ENCODE measurements at regions of chr11 and their contacts with region 1.

Region 1: DNA sequence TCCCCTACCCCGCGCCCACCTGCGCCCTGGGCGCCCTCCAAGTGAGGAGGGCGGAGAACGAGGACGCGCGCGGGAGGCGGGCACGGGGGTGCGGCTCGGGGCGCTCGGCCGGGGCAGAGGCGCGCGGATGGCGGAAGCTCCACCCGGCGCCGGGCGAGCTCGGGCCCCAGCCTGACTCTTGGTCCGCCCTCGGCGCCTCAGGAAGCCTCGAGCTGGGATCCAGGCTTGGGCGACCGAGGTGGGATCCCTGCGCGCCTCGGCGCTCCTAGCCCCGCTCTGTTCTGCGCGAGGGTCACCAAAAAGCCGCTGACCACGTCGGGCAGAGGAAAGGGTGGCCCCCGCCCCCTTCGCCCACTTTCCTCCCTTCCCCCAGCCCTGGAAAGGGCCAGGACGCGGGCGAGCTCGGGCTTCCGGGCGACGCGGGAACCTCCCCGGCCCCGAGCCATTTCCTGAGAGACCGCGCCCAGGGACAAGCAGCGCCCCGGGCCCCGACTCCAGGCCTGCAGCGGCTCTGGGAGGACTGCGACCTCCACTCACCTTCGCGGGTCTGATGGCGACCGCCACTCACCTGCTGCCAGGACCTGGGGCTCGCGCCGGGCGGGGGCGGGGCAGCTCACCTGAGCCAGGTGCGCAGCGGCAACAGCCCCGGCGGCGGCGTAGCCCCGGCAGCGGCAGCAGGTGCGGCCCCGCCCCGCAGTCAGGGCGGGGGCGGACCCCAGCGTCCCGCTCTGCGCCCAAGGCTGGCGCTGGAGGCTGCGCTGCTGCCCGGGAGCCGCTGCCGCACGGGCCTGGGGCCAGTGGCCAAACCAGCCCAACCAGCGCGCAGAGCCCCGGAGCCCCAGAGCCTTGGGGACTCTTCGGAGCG is 2.2 kb upstream of the SIGIRR start:
- DNase-seq: peak; percentile 82
- ATAC-seq: peak; percentile 46
- H3K4me3 Mint-ChIP-seq: peak overlapping the region; percentile 97
- H3K27ac Mint-ChIP-seq: peak overlapping the region; percentile 86
- H3K4me1 Mint-ChIP-seq: peaks cover 15% of the 10 kb centered on the region
- H3K27me3 Mint-ChIP-seq: no peaks in the 10 kb centered on the region

Region 2: GRCh38 chr11:335779-336658 is 81.0 kb before region 1 on chr11:
- POLR2A ChIA-PET with region 1: no interaction called
- DNase-seq: no peak
- ATAC-seq: no peak
- H3K4me3 Mint-ChIP-seq: no peak overlapping the region
- H3K27ac Mint-ChIP-seq: no peak overlapping the region
- H3K4me1 Mint-ChIP-seq: peaks cover 41% of the 10 kb centered on the region
- H3K27me3 Mint-ChIP-seq: peaks cover 2% of the 10 kb centered on the region

Region 3: GRCh38 chr11:441418-442274 is 24.7 kb after region 1 on chr11 and contains the start of gene ANO9:
- POLR2A ChIA-PET with region 1: interaction called, 118 read pairs
- DNase-seq: peak; percentile 76
- ATAC-seq: peak; percentile 93
- H3K4me3 Mint-ChIP-seq: peak within 1 kb of the TSS; percentile 87
- H3K27ac Mint-ChIP-seq: peak within 1 kb of the TSS; percentile 56
- H3K4me1 Mint-ChIP-seq: peaks cover 16% of the 10 kb centered on the region
- H3K27me3 Mint-ChIP-seq: peaks cover 4% of the 10 kb centered on the region
- total RNA-seq, gene ANO9: 115 to 122 TPM

Region 4: GRCh38 chr11:506238-506994 is 89.4 kb after region 1 on chr11:
- POLR2A ChIA-PET with region 1: interaction called, 11 read pairs
- DNase-seq: peak; percentile 98
- ATAC-seq: peak; percentile 83
- H3K4me3 Mint-ChIP-seq: peak overlapping the region; percentile 90
- H3K27ac Mint-ChIP-seq: peak overlapping the region; percentile 99
- H3K4me1 Mint-ChIP-seq: peaks cover 18% of the 10 kb centered on the region
- H3K27me3 Mint-ChIP-seq: no peaks in the 10 kb centered on the region

Measured in activated naive CD8-positive, alpha-beta T cell treated with anti-CD3 and anti-CD28 coated beads, Interleukin-2, amount 10 ng/mL, durations not matched to agents 7 days and 5 days (primary cell).